Astrocyte of the cerebellum (primary cell): ENCODE measurements at regions of chr6 and their contacts with region 1.

Region 1: DNA sequence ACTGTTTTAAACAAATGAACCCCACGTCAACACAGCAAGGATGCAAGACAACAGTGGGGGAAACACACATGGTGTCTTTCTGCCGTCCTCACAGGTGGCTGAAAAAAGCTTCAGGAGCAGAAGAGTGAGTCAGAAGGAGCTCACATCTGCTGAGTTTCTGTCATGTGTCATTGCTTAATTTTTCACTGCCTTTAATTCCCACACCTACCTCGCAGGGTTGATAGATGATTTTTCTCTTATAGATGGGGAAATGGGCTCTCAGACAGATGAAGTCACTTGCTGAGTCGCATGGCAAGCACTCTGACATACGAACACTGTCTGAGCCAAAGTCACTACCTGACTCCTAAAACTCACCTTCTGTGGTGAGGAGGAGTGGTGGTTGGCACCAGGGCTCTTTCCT is 28.3 kb upstream of the CARMIL1 start:
- DNase-seq: no peak
- H3K4me3 ChIP-seq: no peak overlapping the region
- CTCF ChIP-seq: no peak

Region 2: DNA sequence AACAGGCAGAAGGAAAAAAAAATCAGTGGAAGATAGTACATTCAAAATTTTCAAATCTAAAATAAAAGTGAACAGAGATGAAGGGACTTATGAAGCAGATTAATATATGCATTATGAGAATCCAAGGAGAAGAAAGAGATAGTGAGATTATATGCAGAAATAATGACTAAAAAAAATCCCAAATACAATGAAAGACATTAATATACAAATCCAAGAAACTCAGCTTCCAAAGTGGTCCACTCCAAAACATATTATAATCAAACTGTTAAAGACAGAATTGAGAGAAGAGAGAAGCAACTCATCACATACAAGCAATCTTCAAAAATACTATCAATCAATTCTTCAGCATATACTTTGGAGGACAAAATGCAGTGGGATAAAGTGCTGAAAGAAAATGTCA is 45.2 kb before region 1 on chr6:
- in situ Hi-C with region 1: no loop called
- DNase-seq: no peak
- H3K4me3 ChIP-seq: no peak overlapping the region
- CTCF ChIP-seq: no peak

Region 3: GRCh38 chr6:25288143-25288917 is 37.5 kb after region 1 on chr6:
- in situ Hi-C with region 1: no loop called
- DNase-seq: no peak
- H3K4me3 ChIP-seq: no peak overlapping the region
- CTCF ChIP-seq: no peak

Region 4: GRCh38 chr6:25490018-25490801 is 239.3 kb after region 1 on chr6:
- in situ Hi-C with region 1: loop called (anchors 25 kb)
- DNase-seq: peak; percentile 53
- H3K4me3 ChIP-seq: no peak overlapping the region
- CTCF ChIP-seq: peak; percentile 87